Stomach (tissue), 19 donors: ENCODE measurements at regions of chr4 and their contacts with region 1.

Region 1: DNA sequence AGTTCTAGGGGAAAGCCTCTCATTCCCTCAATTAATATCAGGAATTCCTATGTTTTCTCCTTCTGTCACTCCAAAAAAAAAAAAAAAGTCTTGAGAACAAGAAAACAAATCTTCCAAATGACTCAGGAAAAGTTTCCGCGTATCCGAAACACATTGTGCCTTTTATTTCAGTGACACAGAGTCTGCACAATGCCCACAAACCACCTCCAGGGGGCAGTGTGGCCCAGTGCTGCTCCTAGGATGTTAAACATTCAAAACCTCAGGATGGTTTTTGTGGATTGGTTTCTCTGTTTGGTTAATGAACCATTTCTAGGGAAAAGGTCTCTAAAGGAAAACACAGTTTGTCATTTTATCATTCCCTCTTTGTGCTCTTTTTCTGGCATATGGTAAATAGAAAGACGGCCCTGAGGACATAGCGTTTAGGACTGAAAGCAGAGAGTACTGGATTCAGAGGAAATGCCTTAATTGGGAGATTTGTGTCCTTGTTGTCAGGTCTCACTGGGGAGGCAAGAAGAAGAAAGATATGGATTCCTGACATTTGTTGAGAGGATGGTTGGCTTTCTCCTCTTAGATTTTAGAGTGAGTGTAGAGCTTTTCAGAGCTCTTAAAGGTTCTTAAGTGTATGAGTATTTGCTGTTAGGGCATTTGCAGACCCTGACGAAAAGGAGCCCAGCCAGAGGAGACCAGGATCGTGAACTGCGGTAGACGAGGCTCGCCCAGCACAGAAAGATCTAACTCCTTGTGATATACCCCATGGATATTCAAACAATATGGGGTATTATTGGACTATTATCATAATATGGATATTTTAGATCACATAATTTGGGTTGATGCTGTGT is 65.7 kb upstream of the MAP9 start:
- DNase-seq: peak; percentile 78 to 92
- H3K4me3 ChIP-seq: peak overlapping the region in 1 of 4 donors; percentile 17
- H3K27ac ChIP-seq: peak overlapping the region in 3 of 5 donors; percentile 7 to 55 (median 11)
- H3K4me1 ChIP-seq: peaks cover 0 to 8% (median 0%) of the 10 kb centered on the region in 4 donors
- H3K27me3 ChIP-seq: no peaks in the 10 kb centered on the region
- CTCF ChIP-seq: peak in 5 of 7 experiments; percentile 73 to 96 (median 89)
- EP300 ChIP-seq: no peak
- POLR2A ChIP-seq: no peak

Region 2: DNA sequence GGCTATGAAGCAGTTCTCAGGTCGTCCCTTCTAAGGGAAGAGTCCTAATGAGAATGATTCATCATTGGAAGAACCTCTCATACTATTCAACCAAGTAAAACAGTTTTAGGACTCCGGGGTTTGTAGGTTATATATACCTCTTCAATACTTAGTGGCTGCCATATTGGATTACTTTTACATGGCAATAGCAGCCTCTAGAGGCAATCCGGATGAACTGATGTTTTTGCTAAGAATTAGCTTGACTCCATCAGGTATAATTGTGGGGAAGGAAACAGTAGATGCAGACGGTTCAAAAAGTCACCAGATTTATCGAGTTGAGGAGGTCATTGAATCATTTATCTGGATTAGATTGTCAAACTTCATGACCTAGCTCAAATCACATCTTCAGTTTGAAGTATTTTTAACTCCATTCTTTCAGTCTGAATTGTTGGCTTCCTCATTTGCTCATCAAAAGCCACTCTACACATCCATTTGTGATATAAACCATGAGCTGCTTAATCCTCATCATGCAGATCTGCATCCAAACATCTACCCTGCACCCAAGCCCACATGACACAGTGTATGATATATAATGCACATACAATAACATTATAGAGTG is 344.7 kb after region 1 on chr4:
- intact Hi-C with region 1: loop called (anchors 5 kb)
- DNase-seq: peak in 1 of 2 donors; percentile 79
- H3K4me3 ChIP-seq: no peak overlapping the region
- H3K27ac ChIP-seq: no peak overlapping the region
- H3K4me1 ChIP-seq: peaks cover 0 to 30% (median 12%) of the 10 kb centered on the region in 4 donors
- H3K27me3 ChIP-seq: no peaks in the 10 kb centered on the region
- CTCF ChIP-seq: peak in 5 of 7 experiments; percentile 41 to 76 (median 63)
- EP300 ChIP-seq: no peak
- POLR2A ChIP-seq: no peak

Region 3: GRCh38 chr4:156475322-156475721 is 1032.8 kb after region 1 on chr4:
- intact Hi-C with region 1: no loop called
- DNase-seq: peak in 1 of 2 donors; percentile 63
- H3K4me3 ChIP-seq: no peak overlapping the region
- H3K27ac ChIP-seq: no peak overlapping the region
- H3K4me1 ChIP-seq: no peaks in the 10 kb centered on the region
- H3K27me3 ChIP-seq: no peaks in the 10 kb centered on the region
- CTCF ChIP-seq: peak in 4 of 7 experiments; percentile 23 to 47 (median 41)
- EP300 ChIP-seq: no peak
- POLR2A ChIP-seq: no peak